Ovary (tissue), 10 donors: ENCODE measurements at regions of chr19 and their contacts with region 1.

Region 1: GRCh38 chr19:3873151-3873550 is 4.3 kb upstream of the ZFR2 start:
- DNase-seq: no peak
- H3K4me3 ChIP-seq: no peak overlapping the region
- H3K27ac ChIP-seq: no peak overlapping the region
- H3K4me1 ChIP-seq: no peaks in the 10 kb centered on the region
- H3K27me3 ChIP-seq: no peaks in the 10 kb centered on the region
- CTCF ChIP-seq: no peak
- EP300 ChIP-seq: no peak
- POLR2A ChIP-seq: no peak

Region 2: GRCh38 chr19:3950871-3951861 is 78.0 kb after region 1 on chr19:
- intact Hi-C with region 1: no loop called
- DNase-seq: peak in 2 of 5 donors; percentile 36 to 57
- H3K4me3 ChIP-seq: no peak overlapping the region
- H3K27ac ChIP-seq: peak overlapping the region in 1 of 2 donors; percentile 15
- H3K4me1 ChIP-seq: peaks cover 10% of the 10 kb centered on the region
- H3K27me3 ChIP-seq: no peaks in the 10 kb centered on the region
- CTCF ChIP-seq: no peak
- EP300 ChIP-seq: no peak
- POLR2A ChIP-seq: no peak

Region 3: GRCh38 chr19:5179256-5179655 is 1306.1 kb after region 1 on chr19:
- intact Hi-C with region 1: loop called in 1 of 4 experiments (anchors 5 kb)
- DNase-seq: no peak
- H3K4me3 ChIP-seq: no peak overlapping the region
- H3K27ac ChIP-seq: no peak overlapping the region
- H3K4me1 ChIP-seq: no peaks in the 10 kb centered on the region
- H3K27me3 ChIP-seq: no peaks in the 10 kb centered on the region
- CTCF ChIP-seq: no peak
- EP300 ChIP-seq: no peak
- POLR2A ChIP-seq: no peak